Breast epithelium (tissue), 4 donors: ENCODE measurements at regions of chr3 and their contacts with region 1.

Region 1: DNA sequence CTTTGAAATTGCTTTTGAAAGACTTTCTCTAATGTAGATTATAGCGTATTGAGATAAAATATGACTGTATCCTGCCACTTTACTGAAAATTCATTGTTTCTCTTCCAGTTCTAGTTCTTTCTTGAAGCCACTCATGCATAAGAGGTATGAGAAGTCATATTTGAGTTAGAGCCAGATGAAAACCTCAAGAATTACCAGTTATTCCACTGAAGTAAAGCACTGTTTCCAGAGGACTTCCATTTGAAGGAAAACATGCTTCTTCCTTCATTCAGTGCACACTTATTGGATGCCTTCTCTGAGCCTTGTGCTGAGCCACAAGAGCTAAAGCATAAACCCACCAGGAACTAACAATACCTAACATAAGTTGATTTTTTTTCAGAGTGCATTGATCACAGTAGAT is 513.4 kb downstream of the ZNF385D start:
- DNase-seq: no peak
- H3K4me3 ChIP-seq: no peak overlapping the region
- H3K27ac ChIP-seq: no peak overlapping the region
- H3K4me1 ChIP-seq: no peaks in the 10 kb centered on the region
- H3K27me3 ChIP-seq: no peaks in the 10 kb centered on the region
- CTCF ChIP-seq: no peak
- POLR2A ChIP-seq: no peak

Region 2: DNA sequence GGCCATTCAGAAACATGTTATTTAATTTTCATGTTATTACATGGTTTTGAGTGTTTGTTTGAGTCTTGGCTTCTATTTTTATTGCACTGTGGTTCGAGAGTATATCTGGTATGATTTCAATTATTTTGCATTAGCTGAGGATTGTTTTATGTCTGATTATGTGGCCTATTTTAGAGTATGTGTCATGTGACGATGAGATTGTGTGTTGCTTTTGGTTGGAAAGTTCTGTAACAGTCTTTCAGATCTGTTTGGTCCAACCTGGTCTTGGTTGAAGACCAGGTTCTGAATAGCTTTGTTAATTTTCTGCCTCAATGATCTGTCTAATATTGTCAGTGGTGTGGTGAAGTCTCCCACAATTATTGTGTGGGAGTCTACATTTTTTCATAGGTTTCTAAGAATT is 288.3 kb before region 1 on chr3:
- intact Hi-C with region 1: loop called (anchors 10 kb)
- DNase-seq: no peak
- H3K4me3 ChIP-seq: no peak overlapping the region
- H3K27ac ChIP-seq: no peak overlapping the region
- H3K4me1 ChIP-seq: no peaks in the 10 kb centered on the region
- H3K27me3 ChIP-seq: no peaks in the 10 kb centered on the region
- CTCF ChIP-seq: no peak
- POLR2A ChIP-seq: no peak

Region 3: GRCh38 chr3:21942328-21942727 is 704.7 kb after region 1 on chr3:
- intact Hi-C with region 1: loop called (anchors 5 kb)
- DNase-seq: no peak
- H3K4me3 ChIP-seq: no peak overlapping the region
- H3K27ac ChIP-seq: no peak overlapping the region
- H3K4me1 ChIP-seq: no peaks in the 10 kb centered on the region
- H3K27me3 ChIP-seq: no peaks in the 10 kb centered on the region
- CTCF ChIP-seq: no peak
- POLR2A ChIP-seq: no peak